Psoas muscle (tissue), 8 donors: ENCODE measurements at regions of chr9 and their contacts with region 1.

Region 1: DNA sequence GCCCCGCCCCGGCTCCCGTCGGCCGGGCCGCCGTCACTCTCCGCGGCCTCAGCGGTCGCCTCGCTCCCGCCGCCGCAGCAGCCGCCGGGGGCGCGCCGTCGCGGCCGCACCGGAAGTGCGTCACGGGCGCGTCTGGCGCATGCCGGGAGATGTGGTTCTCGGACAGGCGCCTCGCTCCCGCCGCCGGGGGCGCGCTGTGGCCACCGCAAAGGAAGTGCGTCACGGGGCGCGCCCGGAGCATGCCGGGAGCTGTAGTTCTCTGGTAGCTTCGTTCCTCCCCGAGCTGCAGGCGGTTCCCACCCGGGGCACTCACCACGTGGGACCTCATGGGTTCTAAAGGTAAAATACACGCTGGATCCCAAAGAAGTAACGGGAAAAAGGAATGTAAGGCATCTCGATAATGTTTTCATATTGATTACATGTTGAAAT is at the start of gene UBAC1:
- DNase-seq: peak; percentile 97 to 98
- ATAC-seq: peak; percentile 76 to 87 (median 82)
- H3K4me3 ChIP-seq: peak within 1 kb of the TSS; percentile 96
- H3K27ac ChIP-seq: peak within 1 kb of the TSS; percentile 93
- H3K4me1 ChIP-seq: peaks cover 28% of the 10 kb centered on the region
- H3K27me3 ChIP-seq: no peaks in the 10 kb centered on the region
- CTCF ChIP-seq: peak; percentile 32
- total RNA-seq, gene UBAC1: 140 to 233 (median 174) TPM

Region 2: GRCh38 chr9:135701959-135702721 is 259.2 kb before region 1 on chr9 and contains the start of gene KCNT1:
- intact Hi-C with region 1: loop called in 1 of 2 experiments (anchors 10 kb)
- DNase-seq: peak; percentile 51 to 70
- ATAC-seq: peak; percentile 62 to 87 (median 76)
- H3K4me3 ChIP-seq: peak within 1 kb of the TSS; percentile 50
- H3K27ac ChIP-seq: no peak within 1 kb of the TSS
- H3K4me1 ChIP-seq: peaks cover 6% of the 10 kb centered on the region
- H3K27me3 ChIP-seq: peaks cover 0 to 11% (median 5%) of the 10 kb centered on the region in 3 donors
- CTCF ChIP-seq: peak; percentile 93
- total RNA-seq, gene KCNT1: 10.3 to 15.0 (median 12.4) TPM